Activated T-helper 1 cell treated with anti-CD3 and anti-CD28 coated beads, Interleukin-12 subunit alpha, Interleukin-12 subunit beta, Interleukin-2, Interleukin-4 antibody, amounts not matched to agents 30 ng/mL and 10 ng/mL and 1 ng/mL, durations not matched to agents 14 hours and 24 hours and 36 hours (primary cell): ENCODE measurements at regions of chr14 and their contacts with region 1.

Region 1: GRCh38 chr14:33950320-33951182 is at the start of gene EGLN3:
- DNase-seq: peak; percentile 79
- H3K4me3 Mint-ChIP-seq: peak within 1 kb of the TSS; percentile 80
- H3K27ac Mint-ChIP-seq: peak within 1 kb of the TSS; percentile 70
- H3K4me1 Mint-ChIP-seq: peaks cover 44% of the 10 kb centered on the region
- H3K27me3 Mint-ChIP-seq: peaks cover 43% of the 10 kb centered on the region
- total RNA-seq, gene EGLN3: 8.7 and 11.2 TPM in 2 replicates

Region 2: GRCh38 chr14:33602396-33602795 is 348.2 kb before region 1 on chr14:
- intact Hi-C with region 1: no loop called
- DNase-seq: no peak
- H3K4me3 Mint-ChIP-seq: no peak overlapping the region
- H3K27ac Mint-ChIP-seq: no peak overlapping the region
- H3K4me1 Mint-ChIP-seq: no peaks in the 10 kb centered on the region
- H3K27me3 Mint-ChIP-seq: peaks cover 2% of the 10 kb centered on the region

Region 3: DNA sequence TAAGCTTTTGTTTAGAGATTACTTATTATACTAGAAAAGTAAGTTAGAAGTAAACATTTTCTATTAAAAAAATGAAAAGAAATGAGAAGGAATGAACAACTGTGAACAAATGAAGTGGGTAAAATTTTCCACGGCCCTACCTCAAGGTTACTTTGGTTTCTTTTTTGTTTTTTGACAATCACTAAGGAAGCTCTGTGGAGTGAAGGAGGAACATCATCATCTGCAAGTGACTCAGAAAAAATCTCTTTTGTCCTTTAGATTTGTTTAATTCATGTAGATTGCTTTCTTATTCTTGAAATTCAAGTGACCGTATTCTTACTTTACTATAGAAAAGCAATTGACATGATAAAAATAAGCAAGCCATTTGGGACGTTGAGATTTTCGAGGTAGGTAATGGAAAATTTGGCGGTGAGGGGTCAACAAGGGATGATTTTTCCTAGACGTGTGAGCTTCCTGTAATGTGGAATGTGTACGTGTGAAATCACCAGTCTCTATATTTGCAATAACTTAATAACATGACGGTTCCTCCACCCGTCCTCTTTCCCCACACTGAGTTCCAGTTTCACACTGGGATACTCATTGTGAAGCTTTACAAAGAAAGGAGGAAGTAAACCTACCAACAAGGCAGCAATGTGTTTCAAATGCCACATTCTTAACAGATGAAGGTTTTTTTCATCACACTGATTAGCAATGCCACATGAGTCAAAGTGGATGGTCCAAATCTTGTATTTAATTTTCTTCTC is 62.6 kb after region 1 on chr14:
- intact Hi-C with region 1: loop called (anchors 2 kb)
- DNase-seq: no peak
- H3K4me3 Mint-ChIP-seq: peak overlapping the region; percentile 47
- H3K27ac Mint-ChIP-seq: peak overlapping the region; percentile 82
- H3K4me1 Mint-ChIP-seq: peaks cover 47% of the 10 kb centered on the region
- H3K27me3 Mint-ChIP-seq: no peaks in the 10 kb centered on the region

Region 4: DNA sequence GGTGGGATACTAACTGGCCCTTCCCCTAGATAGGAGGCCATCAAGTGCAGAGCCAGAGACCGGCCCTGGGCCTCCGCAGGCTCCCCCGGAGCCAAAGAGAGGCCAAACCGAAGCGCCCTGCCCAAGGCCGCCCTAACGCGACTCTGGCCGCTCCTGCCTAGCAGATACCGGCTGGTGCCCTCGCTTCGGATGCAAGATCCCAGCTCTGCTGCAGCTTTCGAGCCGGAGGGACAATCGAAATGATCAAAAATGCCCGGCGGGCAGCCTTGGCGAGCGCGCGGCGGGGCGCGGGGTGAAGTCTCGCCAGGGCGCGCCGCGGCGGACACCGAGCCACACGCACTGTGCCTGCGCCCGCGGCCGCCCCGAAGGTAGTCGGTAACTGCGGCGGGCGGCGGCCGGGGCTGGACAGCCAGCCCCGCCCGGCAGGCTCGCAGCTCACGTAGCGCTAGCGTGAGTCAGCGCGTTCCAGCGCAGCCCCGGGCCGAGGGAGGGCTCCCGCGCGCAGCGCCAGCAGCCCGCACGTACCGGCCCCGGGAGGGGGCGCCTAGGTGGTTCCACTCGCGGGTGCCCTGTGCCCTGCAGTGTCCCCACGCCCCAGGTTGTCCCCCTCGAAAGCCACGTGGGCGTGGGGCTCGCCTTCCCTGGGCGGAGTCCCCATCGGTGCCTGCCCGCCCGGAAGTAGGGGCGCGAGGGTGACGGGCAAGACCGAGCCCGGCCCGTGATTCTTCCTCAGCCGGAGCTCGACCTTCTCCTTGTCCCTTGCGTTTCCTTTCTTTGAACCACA is 109.5 kb after region 1 on chr14:
- intact Hi-C with region 1: loop called (anchors 2 kb)
- DNase-seq: peak; percentile 66
- H3K4me3 Mint-ChIP-seq: peak overlapping the region; percentile 83
- H3K27ac Mint-ChIP-seq: peak overlapping the region; percentile 87
- H3K4me1 Mint-ChIP-seq: peaks cover 48% of the 10 kb centered on the region
- H3K27me3 Mint-ChIP-seq: peaks cover 4% of the 10 kb centered on the region

Region 5: GRCh38 chr14:34098045-34098984 is 147.8 kb after region 1 on chr14:
- intact Hi-C with region 1: loop called (anchors 1 kb)
- DNase-seq: peak; percentile 21
- H3K4me3 Mint-ChIP-seq: no peak overlapping the region
- H3K27ac Mint-ChIP-seq: no peak overlapping the region
- H3K4me1 Mint-ChIP-seq: peaks cover 61% of the 10 kb centered on the region
- H3K27me3 Mint-ChIP-seq: peaks cover 3% of the 10 kb centered on the region

Region 6: DNA sequence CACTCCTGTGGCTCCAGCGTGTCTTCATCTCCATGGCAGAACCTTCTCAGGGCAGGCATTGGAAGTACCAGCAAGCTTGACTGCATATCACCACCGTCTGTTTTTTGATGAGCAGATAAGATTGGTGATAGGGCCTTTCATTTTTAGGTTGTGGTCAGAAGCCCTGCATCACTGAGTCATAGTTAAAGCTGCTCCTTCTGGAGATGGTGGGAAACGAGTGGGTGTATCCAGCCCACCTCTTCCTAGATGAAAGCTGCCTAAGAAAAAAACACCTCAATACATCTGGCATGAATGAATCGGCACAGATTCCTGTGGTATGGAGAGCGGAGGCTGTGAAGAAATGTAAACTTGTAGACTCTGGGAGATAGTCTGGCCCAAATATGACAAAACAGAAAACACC is 249.0 kb after region 1 on chr14:
- intact Hi-C with region 1: loop called (anchors 5 kb)
- DNase-seq: no peak
- H3K4me3 Mint-ChIP-seq: peak overlapping the region; percentile 56
- H3K27ac Mint-ChIP-seq: peak overlapping the region; percentile 63
- H3K4me1 Mint-ChIP-seq: peaks cover 56% of the 10 kb centered on the region
- H3K27me3 Mint-ChIP-seq: no peaks in the 10 kb centered on the region

Region 7: DNA sequence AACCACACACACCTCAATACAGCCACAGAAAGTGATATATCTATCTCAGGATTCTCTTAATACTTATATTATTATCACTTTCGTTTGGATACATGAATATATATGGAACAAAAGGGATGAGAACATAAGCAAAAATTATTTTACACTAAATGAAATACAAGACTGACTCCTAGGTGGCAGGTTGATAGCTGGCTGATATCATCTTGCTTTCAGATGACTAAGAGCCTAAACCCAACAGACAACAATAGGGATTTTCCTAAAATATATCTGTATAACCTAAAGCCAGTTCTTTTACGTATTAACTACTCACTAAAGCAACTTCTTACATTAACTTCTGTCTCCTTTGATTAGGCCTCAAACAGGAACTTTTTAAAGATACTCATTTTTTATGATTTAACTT is 859.5 kb after region 1 on chr14:
- intact Hi-C with region 1: no loop called
- DNase-seq: no peak
- H3K4me3 Mint-ChIP-seq: no peak overlapping the region
- H3K27ac Mint-ChIP-seq: no peak overlapping the region
- H3K4me1 Mint-ChIP-seq: peaks cover 20% of the 10 kb centered on the region
- H3K27me3 Mint-ChIP-seq: no peaks in the 10 kb centered on the region